ENCODE measurements at regions of chr11 and their contacts with region 1.

Region 1: DNA sequence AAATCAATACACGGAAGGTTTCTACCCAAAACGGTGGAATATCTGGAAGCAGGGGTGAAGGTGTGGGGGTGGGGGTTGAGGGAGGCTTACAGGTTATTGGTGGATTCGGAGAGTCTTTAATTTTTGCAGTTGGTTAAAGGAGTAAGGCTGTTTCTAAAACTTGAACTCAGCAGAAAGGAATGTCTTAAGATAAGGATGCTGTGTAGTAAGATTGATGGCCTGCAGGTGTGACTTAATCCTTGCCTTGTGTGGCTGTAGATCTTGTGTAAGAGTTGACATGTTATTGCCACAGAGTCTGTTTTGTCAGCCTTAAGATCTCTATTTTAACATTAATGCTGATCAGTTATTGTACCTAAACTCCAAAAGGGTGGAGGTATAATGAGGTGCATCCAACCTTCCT is 16.4 kb upstream of the OR6M1 start:
- DNase-seq: no peak
- ATAC-seq: no peak
- H3K4me3 Mint-ChIP-seq: no peak overlapping the region
- H3K27ac Mint-ChIP-seq: no peak overlapping the region
- H3K4me1 Mint-ChIP-seq: no peaks in the 10 kb centered on the region
- H3K27me3 Mint-ChIP-seq: peaks cover 10% of the 10 kb centered on the region
- CTCF ChIP-seq: no peak

Region 2: DNA sequence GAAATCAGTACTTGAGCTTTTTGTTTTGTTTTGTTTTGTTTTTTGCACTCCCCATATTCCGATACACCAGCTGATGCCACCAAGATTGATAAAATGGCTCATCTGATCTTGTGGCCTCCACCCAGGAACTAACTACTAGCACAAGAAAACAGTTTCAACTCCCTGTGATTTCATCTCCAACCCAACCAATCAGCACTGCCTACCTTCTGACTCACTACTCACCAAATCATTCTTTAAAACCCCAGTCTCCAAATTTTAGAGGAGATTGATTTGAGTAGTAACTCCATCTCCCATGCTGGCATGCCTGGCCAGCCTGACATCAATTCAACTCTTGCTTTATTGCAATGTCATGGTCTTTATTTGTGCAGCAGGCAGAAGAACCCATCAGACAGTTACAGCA is 1000.4 kb before region 1 on chr11:
- CTCF ChIA-PET with region 1: no interaction called
- POLR2A ChIA-PET with region 1: interaction called, 14 read pairs
- intact Hi-C with region 1: no loop called
- DNase-seq: no peak
- ATAC-seq: no peak
- H3K4me3 Mint-ChIP-seq: no peak overlapping the region
- H3K27ac Mint-ChIP-seq: no peak overlapping the region
- H3K4me1 Mint-ChIP-seq: no peaks in the 10 kb centered on the region
- H3K27me3 Mint-ChIP-seq: peaks cover 9% of the 10 kb centered on the region
- CTCF ChIP-seq: no peak

Region 3: GRCh38 chr11:123801765-123802164 is 20.8 kb before region 1 on chr11:
- CTCF ChIA-PET with region 1: no interaction called
- POLR2A ChIA-PET with region 1: no interaction called
- intact Hi-C with region 1: no loop called
- DNase-seq: no peak
- ATAC-seq: no peak
- H3K4me3 Mint-ChIP-seq: no peak overlapping the region
- H3K27ac Mint-ChIP-seq: no peak overlapping the region
- H3K4me1 Mint-ChIP-seq: no peaks in the 10 kb centered on the region
- H3K27me3 Mint-ChIP-seq: peaks cover 2% of the 10 kb centered on the region
- CTCF ChIP-seq: no peak

Measured in activated B cell treated with CpG ODN at 0.5 μM for 24 hours (primary cell).